Endothelial cell of umbilical vein (primary cell): ENCODE measurements at regions of chr15 and their contacts with region 1.

Region 1: GRCh38 chr15:60787837-60788691 is 309.1 kb upstream of the ICE2 start:
- DNase-seq: peak; percentile 31
- H3K4me3 ChIP-seq: no peak overlapping the region
- H3K27ac ChIP-seq: no peak overlapping the region
- H3K4me1 ChIP-seq: no peaks in the 10 kb centered on the region
- H3K27me3 ChIP-seq: no peaks in the 10 kb centered on the region
- CTCF ChIP-seq: peak; percentile 38 to 39
- POLR2A ChIP-seq: no peak

Region 2: DNA sequence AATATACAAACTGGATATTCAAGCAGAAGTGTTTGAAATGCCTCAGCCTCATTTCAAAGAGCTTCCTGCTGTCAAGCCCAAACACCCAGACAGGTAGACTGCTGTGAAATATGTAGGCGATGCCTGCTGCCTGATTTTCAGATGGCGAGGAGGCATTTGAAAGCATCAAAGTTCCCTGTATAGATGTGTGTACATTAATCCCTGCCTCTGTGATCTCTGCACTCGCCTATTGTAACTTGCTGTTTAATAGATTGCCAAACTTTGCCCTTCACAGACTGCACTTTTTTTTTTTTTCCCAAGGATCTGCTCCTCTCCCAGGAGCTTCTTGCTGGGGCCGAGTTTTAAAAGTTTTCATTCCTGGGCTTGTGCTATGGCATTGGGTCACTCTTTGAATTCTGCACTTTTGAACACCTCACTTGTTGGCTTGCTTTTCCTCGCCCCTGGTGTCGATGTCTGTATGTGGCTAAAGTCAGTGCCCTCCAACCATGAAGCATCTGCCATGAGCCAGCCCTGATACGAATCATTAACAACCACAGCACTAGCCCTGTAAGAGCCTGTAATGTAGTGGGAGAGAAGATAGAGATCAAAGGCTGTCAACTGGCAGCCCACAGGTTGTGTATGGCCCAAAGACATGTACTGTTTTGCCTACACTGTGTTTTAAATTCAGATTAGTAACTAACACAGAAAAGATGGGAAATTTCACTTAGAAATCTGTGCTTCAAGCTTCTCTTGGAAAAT is 21.5 kb before region 1 on chr15:
- CTCF ChIA-PET with region 1: interaction called, 14 read pairs
- POLR2A ChIA-PET with region 1: no interaction called
- dilution Hi-C with region 1: no loop called
- intact Hi-C with region 1: no loop called
- DNase-seq: no peak
- H3K4me3 ChIP-seq: no peak overlapping the region
- H3K27ac ChIP-seq: no peak overlapping the region
- H3K4me1 ChIP-seq: peaks cover 23% of the 10 kb centered on the region
- H3K27me3 ChIP-seq: no peaks in the 10 kb centered on the region
- CTCF ChIP-seq: no peak
- POLR2A ChIP-seq: no peak

Region 3: DNA sequence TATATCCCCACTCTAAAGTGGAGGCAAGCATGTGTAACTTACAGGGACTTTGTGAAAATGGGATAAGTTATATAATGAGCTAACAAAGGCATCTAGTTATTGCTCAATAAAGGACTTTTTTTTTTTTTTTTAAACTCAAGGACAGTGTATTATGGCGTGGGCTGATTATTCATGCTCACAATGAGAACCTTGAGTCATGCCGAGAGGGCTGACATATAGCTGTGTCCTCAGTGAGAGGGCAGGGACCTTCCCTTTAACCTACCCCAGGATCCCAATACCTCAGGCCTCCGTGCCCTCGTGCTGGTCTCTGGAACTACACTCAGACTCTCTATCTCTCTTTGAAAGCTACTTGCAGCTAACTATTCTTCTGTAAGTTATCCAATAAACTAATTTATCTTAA is 10.8 kb after region 1 on chr15:
- CTCF ChIA-PET with region 1: interaction called, 21 read pairs
- POLR2A ChIA-PET with region 1: no interaction called
- dilution Hi-C with region 1: no loop called
- intact Hi-C with region 1: no loop called
- DNase-seq: no peak
- H3K4me3 ChIP-seq: no peak overlapping the region
- H3K27ac ChIP-seq: no peak overlapping the region
- H3K4me1 ChIP-seq: no peaks in the 10 kb centered on the region
- H3K27me3 ChIP-seq: no peaks in the 10 kb centered on the region
- CTCF ChIP-seq: no peak
- POLR2A ChIP-seq: no peak

Region 4: DNA sequence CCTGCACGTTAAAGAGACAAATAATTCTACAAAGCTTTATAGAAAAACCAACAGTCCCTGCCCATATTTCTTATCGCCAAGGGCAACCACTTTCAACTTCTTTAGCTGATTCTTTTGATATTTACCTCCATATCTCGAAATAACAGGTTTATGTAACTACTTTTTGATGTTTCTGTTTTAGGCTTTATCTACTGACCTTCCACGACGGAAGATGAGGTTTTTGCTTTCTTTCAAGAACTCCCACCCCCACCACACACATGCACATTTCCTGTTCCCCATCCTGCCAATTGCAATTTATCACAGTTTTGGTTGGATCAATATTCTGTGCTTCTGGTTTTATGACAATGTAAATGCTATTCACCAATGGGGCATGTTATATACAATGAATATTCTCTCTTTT is 21.3 kb after region 1 on chr15:
- CTCF ChIA-PET with region 1: interaction called, 13 read pairs
- POLR2A ChIA-PET with region 1: no interaction called
- dilution Hi-C with region 1: no loop called
- intact Hi-C with region 1: no loop called
- DNase-seq: no peak
- H3K4me3 ChIP-seq: no peak overlapping the region
- H3K27ac ChIP-seq: no peak overlapping the region
- H3K4me1 ChIP-seq: no peaks in the 10 kb centered on the region
- H3K27me3 ChIP-seq: no peaks in the 10 kb centered on the region
- CTCF ChIP-seq: no peak
- POLR2A ChIP-seq: no peak

Region 5: GRCh38 chr15:60899322-60899966 is 111.4 kb after region 1 on chr15:
- CTCF ChIA-PET with region 1: no interaction called
- POLR2A ChIA-PET with region 1: no interaction called
- dilution Hi-C with region 1: no loop called
- intact Hi-C with region 1: no loop called
- DNase-seq: no peak
- H3K4me3 ChIP-seq: no peak overlapping the region
- H3K27ac ChIP-seq: no peak overlapping the region
- H3K4me1 ChIP-seq: no peaks in the 10 kb centered on the region
- H3K27me3 ChIP-seq: no peaks in the 10 kb centered on the region
- CTCF ChIP-seq: no peak
- POLR2A ChIP-seq: no peak

Region 6: GRCh38 chr15:60994963-60995475 is 207.0 kb after region 1 on chr15:
- CTCF ChIA-PET with region 1: no interaction called
- POLR2A ChIA-PET with region 1: no interaction called
- dilution Hi-C with region 1: no loop called
- intact Hi-C with region 1: no loop called
- DNase-seq: peak; percentile 47
- H3K4me3 ChIP-seq: no peak overlapping the region
- H3K27ac ChIP-seq: no peak overlapping the region
- H3K4me1 ChIP-seq: peaks cover 11% of the 10 kb centered on the region
- H3K27me3 ChIP-seq: no peaks in the 10 kb centered on the region
- CTCF ChIP-seq: no peak
- POLR2A ChIP-seq: no peak

Region 7: DNA sequence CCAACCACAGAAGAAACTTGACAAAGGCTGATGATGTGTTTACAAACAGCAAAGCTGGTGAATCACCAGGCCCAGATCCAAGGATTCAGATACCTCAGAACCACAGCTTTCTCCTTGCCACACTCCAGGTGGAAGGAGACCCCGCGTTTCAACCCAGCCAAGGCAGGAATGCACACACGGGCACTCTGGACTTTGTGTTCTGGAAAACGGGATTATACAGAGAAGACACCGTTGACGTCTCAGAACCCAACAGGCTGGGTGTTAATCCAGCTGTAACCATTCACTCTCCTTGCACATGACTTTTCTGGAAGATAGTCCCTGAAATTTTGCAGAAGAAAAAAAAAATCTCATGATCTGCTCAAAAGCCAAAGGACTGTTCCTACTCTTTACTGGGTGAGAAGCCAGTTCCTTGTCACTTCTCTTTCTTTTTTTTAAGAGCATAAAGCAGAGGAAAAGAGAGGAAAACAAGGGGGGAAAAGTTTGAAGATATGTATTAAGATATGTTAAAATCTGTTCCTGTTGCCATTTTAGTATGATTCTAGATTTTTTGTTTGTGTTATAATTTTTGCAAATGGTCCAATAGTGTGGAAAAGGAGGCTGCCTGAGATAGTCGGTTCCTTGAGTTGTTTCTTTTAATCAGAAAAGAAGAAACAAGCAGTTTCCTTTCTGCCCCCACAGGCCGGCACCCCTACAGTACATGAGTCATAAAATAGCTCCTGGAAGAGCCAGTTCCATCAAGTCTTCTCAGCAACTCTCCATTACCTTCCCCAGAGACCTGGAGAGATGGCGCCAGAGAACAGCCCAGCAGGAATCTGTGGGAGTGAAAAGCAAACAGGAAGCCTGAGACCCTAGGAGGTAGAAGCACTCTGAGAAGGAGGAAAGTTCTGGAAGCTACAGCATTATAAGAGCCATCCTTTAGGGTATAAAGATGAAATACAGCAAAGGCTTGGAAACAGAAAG is 368.0 kb after region 1 on chr15:
- CTCF ChIA-PET with region 1: no interaction called
- POLR2A ChIA-PET with region 1: no interaction called
- dilution Hi-C with region 1: no loop called
- intact Hi-C with region 1: no loop called
- DNase-seq: no peak
- H3K4me3 ChIP-seq: no peak overlapping the region
- H3K27ac ChIP-seq: no peak overlapping the region
- H3K4me1 ChIP-seq: no peaks in the 10 kb centered on the region
- H3K27me3 ChIP-seq: peaks cover 5% of the 10 kb centered on the region in 2 experiments
- CTCF ChIP-seq: no peak
- POLR2A ChIP-seq: no peak